ENCODE measurements at regions of chr17 and their contacts with region 1.

Region 1: DNA sequence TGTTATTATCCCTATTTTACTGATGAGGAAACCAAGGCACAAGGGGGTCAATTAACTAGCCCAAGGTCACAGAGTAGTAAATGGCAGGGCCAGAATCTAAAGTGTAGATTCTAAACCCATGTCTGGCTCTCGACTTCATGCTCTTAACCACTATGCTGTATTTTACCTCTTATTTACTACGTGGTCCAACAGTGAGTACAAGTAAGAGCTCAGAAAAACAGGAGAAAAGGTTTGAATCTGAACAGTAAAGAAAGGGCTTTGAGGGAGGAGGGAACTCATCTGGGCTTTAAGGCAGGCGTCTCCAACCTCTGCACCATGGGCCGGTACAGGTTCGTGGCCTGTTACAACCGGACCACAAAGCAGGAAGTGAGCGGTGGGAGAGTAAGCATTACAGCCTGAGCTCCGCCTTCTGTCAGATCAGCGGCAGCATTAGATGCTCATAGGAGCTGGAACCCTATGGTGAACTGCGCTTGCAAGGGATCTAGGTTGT is 62.9 kb downstream of the SMURF2 start:
- DNase-seq: peak; percentile 21 to 60 (median 39)
- ATAC-seq: peak; percentile 99
- H3K4me3 ChIP-seq: no peak overlapping the region
- H3K4me3 Mint-ChIP-seq: peak overlapping the region; percentile 65 to 86 (median 76)
- H3K27ac ChIP-seq: peak overlapping the region; percentile 40
- H3K27ac Mint-ChIP-seq: peak overlapping the region; percentile 64 to 95 (median 79)
- H3K4me1 ChIP-seq: peaks cover 8 to 14% of the 10 kb centered on the region in 2 donors
- H3K4me1 Mint-ChIP-seq: peaks cover 27 to 52% (median 38%) of the 10 kb centered on the region in 7 donors
- H3K27me3 ChIP-seq: no peaks in the 10 kb centered on the region
- H3K27me3 Mint-ChIP-seq: no peaks in the 10 kb centered on the region

Region 2: GRCh38 chr17:64635647-64636307 is 36.5 kb after region 1 on chr17:
- CTCF ChIA-PET with region 1: no interaction called
- POLR2A ChIA-PET with region 1: no interaction called
- intact Hi-C with region 1: no loop called
- DNase-seq: no peak
- ATAC-seq: peak; percentile 22
- H3K4me3 ChIP-seq: no peak overlapping the region
- H3K4me3 Mint-ChIP-seq: peak overlapping the region in 1 of 10 donors; percentile 34
- H3K27ac ChIP-seq: no peak overlapping the region
- H3K27ac Mint-ChIP-seq: peak overlapping the region in 2 of 9 donors; percentile 17 to 82
- H3K4me1 ChIP-seq: peaks cover 0 to 8% of the 10 kb centered on the region in 2 donors
- H3K4me1 Mint-ChIP-seq: peaks cover 30 to 67% (median 65%) of the 10 kb centered on the region in 7 donors
- H3K27me3 ChIP-seq: no peaks in the 10 kb centered on the region
- H3K27me3 Mint-ChIP-seq: no peaks in the 10 kb centered on the region

Region 3: DNA sequence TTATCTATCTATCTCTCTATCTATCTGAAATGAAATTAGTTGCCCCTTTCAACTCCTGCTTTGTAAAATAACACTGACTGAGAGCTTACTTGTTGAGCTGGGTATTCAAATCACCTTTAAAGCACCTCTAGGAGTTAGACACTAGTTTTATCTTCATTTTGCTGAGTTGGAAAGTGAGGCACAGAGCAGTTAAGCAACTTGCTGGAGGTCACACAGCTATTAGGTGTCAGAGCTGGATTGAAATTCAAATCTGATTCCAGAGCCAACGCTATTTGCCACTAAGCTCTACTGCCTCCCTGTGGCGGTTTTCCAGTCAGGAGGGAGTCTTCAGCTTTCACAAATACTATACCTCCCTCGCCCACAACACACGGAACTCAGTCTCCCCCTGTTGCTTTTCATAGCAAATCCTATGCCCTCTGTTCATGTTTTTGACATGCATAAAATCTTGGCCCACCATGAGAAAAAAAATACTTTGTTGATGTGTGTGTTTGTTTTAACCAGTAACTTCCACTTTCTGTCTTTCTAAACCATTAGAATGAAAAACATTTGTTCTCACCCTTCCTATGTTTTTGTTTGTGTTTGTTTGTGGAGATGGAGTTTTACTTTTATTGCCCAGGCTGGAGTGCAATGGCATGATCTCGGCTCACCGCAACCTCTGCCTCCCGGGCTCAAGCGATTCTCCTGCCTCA is 137.7 kb after region 1 on chr17:
- CTCF ChIA-PET with region 1: interaction called, 3 read pairs
- POLR2A ChIA-PET with region 1: no interaction called
- intact Hi-C with region 1: loop called in 1 of 2 experiments (anchors 10 kb)
- DNase-seq: peak in 8 of 9 donors; percentile 15 to 59 (median 53)
- ATAC-seq: peak; percentile 78
- H3K4me3 ChIP-seq: no peak overlapping the region
- H3K4me3 Mint-ChIP-seq: peak overlapping the region in 1 of 10 donors; percentile 39
- H3K27ac ChIP-seq: no peak overlapping the region
- H3K27ac Mint-ChIP-seq: peak overlapping the region in 3 of 9 donors; percentile 8 to 59 (median 9)
- H3K4me1 ChIP-seq: peaks cover 0 to 12% of the 10 kb centered on the region in 2 donors
- H3K4me1 Mint-ChIP-seq: peaks cover 6 to 26% (median 18%) of the 10 kb centered on the region in 7 donors
- H3K27me3 ChIP-seq: no peaks in the 10 kb centered on the region
- H3K27me3 Mint-ChIP-seq: no peaks in the 10 kb centered on the region

Region 4: GRCh38 chr17:65131946-65132366 is 532.7 kb after region 1 on chr17:
- CTCF ChIA-PET with region 1: no interaction called
- POLR2A ChIA-PET with region 1: no interaction called
- intact Hi-C with region 1: no loop called
- DNase-seq: no peak
- ATAC-seq: no peak
- H3K4me3 ChIP-seq: no peak overlapping the region
- H3K4me3 Mint-ChIP-seq: no peak overlapping the region
- H3K27ac ChIP-seq: no peak overlapping the region
- H3K27ac Mint-ChIP-seq: no peak overlapping the region
- H3K4me1 ChIP-seq: peaks cover 3 to 6% of the 10 kb centered on the region in 2 donors
- H3K4me1 Mint-ChIP-seq: peaks cover 0 to 11% (median 4%) of the 10 kb centered on the region in 7 donors
- H3K27me3 ChIP-seq: peaks cover 0 to 3% of the 10 kb centered on the region in 2 donors
- H3K27me3 Mint-ChIP-seq: peaks cover 0 to 50% (median 7%) of the 10 kb centered on the region in 5 donors

Measured in naive thymus-derived CD4-positive, alpha-beta T cell (primary cell).